Caco-2 (cell line): ENCODE measurements at regions of chr20 and their contacts with region 1.

Region 1: GRCh38 chr20:266596-267562 is 9.4 kb downstream of the DEFB132 start:
- DNase-seq: peak; percentile 96
- H3K4me3 ChIP-seq: peak overlapping the region; percentile 34
- H3K4me3 Mint-ChIP-seq: peak overlapping the region; percentile 78
- H3K27ac Mint-ChIP-seq: peak overlapping the region; percentile 90
- H3K4me1 ChIP-seq: peaks cover 4% of the 10 kb centered on the region; the same call in 1 of the 2 replicates
- H3K4me1 Mint-ChIP-seq: no peaks in the 10 kb centered on the region
- H3K27me3 ChIP-seq: no peaks in the 10 kb centered on the region
- H3K27me3 Mint-ChIP-seq: no peaks in the 10 kb centered on the region
- CTCF ChIP-seq: peak; percentile 96 to 97

Region 2: DNA sequence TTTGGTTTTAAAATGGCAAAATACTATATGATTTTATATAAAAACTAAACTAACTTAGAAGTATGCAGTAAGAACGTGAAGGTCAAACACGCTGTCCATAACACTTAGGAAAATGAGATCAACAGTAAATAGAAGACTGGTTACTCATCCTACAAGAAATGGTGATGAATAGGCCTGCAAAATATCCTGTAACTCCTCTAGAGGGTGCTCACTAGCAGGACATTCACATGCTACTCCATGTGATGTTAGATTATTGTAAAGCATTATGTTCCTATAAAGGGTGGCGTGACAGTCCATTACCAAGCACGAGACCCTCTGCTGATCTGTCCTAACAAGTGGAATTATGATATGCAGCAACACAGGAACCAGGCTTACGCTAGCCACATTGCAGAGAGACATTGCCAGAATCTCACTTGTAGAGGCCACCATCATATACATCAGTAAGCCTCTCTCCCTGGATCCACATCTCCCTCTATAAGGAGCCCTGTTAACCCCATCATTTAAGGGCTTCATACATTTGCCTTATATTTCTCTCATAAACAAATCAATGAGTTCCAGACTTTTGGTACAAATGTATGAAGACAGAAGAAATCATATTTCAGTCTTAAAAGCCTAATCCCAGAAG is 57.8 kb before region 1 on chr20:
- CTCF ChIA-PET with region 1: no interaction called
- POLR2A ChIA-PET with region 1: no interaction called
- intact Hi-C with region 1: loop called (anchors 1 kb)
- DNase-seq: peak in 1 of 2 experiments; percentile 38
- H3K4me3 ChIP-seq: no peak overlapping the region
- H3K4me3 Mint-ChIP-seq: no peak overlapping the region
- H3K27ac Mint-ChIP-seq: no peak overlapping the region
- H3K4me1 ChIP-seq: peaks cover 4% of the 10 kb centered on the region
- H3K4me1 Mint-ChIP-seq: peaks cover 9% of the 10 kb centered on the region
- H3K27me3 ChIP-seq: no peaks in the 10 kb centered on the region
- H3K27me3 Mint-ChIP-seq: no peaks in the 10 kb centered on the region
- CTCF ChIP-seq: peak; percentile 34 to 59

Region 3: GRCh38 chr20:219290-220115 is 47.4 kb before region 1 on chr20:
- CTCF ChIA-PET with region 1: interaction called, 5 read pairs
- POLR2A ChIA-PET with region 1: no interaction called
- intact Hi-C with region 1: loop called (anchors 5 kb)
- DNase-seq: peak in 1 of 2 experiments; percentile 54
- H3K4me3 ChIP-seq: no peak overlapping the region
- H3K4me3 Mint-ChIP-seq: no peak overlapping the region
- H3K27ac Mint-ChIP-seq: no peak overlapping the region
- H3K4me1 ChIP-seq: no peaks in the 10 kb centered on the region
- H3K4me1 Mint-ChIP-seq: no peaks in the 10 kb centered on the region
- H3K27me3 ChIP-seq: no peaks in the 10 kb centered on the region
- H3K27me3 Mint-ChIP-seq: peaks cover 5% of the 10 kb centered on the region
- CTCF ChIP-seq: peak; percentile 57 to 58

Region 4: GRCh38 chr20:235891-236290 is 31.0 kb before region 1 on chr20:
- CTCF ChIA-PET with region 1: no interaction called
- POLR2A ChIA-PET with region 1: interaction called, 3 read pairs
- intact Hi-C with region 1: loop called (anchors 1 kb)
- DNase-seq: peak in 1 of 2 experiments; percentile 16
- H3K4me3 ChIP-seq: no peak overlapping the region
- H3K4me3 Mint-ChIP-seq: no peak overlapping the region
- H3K27ac Mint-ChIP-seq: no peak overlapping the region
- H3K4me1 ChIP-seq: no peaks in the 10 kb centered on the region
- H3K4me1 Mint-ChIP-seq: no peaks in the 10 kb centered on the region
- H3K27me3 ChIP-seq: no peaks in the 10 kb centered on the region
- H3K27me3 Mint-ChIP-seq: no peaks in the 10 kb centered on the region
- CTCF ChIP-seq: peak in 1 of 2 experiments; percentile 25

Region 5: DNA sequence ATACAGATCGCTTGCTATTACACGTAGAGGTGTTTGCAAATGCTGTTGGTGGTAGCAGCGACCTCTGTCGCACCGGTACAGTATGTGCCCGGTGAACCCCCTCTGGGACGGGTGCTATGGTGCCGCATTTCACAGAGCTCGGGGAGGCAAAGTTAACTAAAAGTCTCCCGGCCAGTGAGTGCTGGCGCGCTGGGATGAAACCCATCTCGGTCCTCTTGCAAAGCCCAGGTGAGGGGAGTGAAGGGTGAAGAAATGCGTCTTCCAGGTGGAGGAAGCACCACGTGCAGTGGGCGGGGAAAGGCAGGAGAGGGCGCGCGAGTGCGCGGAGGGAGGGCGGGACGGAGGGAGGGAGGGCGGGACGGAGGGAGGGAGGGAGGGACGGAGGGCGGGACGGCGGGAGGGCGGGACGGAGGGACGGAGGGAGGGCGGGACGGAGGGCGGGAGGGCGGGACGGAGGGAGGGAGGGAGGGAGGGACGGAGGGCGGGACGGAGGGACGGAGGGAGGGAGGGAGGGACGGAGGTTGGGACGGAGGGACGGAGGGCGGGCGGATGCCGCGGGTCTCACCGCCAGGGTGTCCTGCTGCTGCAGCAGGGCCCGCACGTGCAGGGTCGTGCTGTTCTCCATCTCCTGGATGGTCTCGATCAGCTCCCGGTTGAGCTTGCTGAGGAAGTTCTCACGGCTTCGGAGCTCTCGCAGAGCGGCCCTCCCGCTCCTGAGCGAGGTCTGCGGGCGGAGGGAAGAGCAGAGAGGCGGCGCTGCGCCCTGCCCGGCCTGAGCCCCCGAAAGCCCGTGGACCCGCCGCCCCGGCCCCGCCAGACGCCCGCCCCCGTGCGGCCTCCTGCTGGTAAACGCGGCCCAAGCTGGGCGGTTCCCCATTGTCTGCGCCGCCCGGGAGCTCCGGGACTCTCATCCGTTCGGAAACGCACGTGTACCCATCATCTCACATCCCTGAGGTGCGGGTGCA is 12.0 kb after region 1 on chr20:
- CTCF ChIA-PET with region 1: no interaction called
- POLR2A ChIA-PET with region 1: no interaction called
- intact Hi-C with region 1: no loop called
- DNase-seq: peak in 1 of 2 experiments; percentile 27
- H3K4me3 ChIP-seq: no peak overlapping the region
- H3K4me3 Mint-ChIP-seq: no peak overlapping the region
- H3K27ac Mint-ChIP-seq: no peak overlapping the region
- H3K4me1 ChIP-seq: no peaks in the 10 kb centered on the region
- H3K4me1 Mint-ChIP-seq: no peaks in the 10 kb centered on the region
- H3K27me3 ChIP-seq: no peaks in the 10 kb centered on the region
- H3K27me3 Mint-ChIP-seq: no peaks in the 10 kb centered on the region
- CTCF ChIP-seq: no peak

Region 6: GRCh38 chr20:330233-331149 is 63.6 kb after region 1 on chr20:
- CTCF ChIA-PET with region 1: interaction called, 11 read pairs
- POLR2A ChIA-PET with region 1: no interaction called
- intact Hi-C with region 1: loop called (anchors 2 kb)
- DNase-seq: peak; percentile 76 to 77
- H3K4me3 ChIP-seq: no peak overlapping the region
- H3K4me3 Mint-ChIP-seq: no peak overlapping the region
- H3K27ac Mint-ChIP-seq: no peak overlapping the region
- H3K4me1 ChIP-seq: 0 out of 2 replicates have a peak, but pooled peaks cover 5% of the 10 kb centered on the region
- H3K4me1 Mint-ChIP-seq: peaks cover 8% of the 10 kb centered on the region
- H3K27me3 ChIP-seq: no peaks in the 10 kb centered on the region
- H3K27me3 Mint-ChIP-seq: no peaks in the 10 kb centered on the region
- CTCF ChIP-seq: peak; percentile 89 to 93